ENCODE measurements at regions of chr19 and their contacts with region 1.

Region 1: DNA sequence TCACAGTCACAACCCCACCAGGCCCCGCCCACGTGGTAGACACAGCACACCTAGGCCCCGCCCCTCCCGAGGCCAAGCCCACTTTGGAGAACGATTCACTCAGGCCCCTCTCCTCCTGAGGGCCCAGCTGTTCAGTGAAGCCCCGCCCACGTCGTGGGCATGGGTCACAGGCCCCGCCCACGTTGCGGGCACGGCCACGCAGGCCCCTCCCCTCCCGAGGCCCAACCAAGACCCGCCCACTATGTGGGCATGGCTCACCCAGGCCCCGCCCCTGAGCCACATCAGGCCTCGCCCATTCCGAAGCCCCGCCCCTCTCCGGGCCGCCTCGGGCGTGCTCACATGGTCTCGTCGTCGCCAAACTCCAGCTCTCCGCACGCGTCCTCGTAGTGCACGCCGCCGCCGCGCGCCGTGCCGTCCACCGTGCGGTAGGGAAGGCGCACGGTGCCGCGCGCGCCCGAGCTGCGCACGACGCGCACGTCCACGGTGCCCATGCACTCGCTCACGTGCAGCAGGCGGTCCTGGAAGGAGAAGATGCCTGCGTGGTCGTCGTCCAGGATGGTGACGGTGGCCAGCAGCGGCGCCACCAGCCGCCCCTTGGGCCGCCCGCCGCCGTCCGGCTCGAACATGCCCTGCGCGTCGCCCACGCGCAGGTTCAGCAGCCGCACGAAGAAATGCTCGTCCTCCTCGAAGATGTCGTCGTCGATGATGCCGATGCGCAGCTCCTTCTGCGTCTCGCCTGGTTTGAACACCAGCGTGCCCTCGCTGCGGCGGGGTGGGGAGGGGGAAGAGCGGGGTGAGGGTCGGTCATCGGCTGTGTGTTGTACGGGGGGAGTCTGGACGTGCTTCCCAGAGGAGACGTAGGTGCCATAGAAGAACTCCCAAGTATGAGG is 24.0 kb downstream of the SLC8A2 start:
- DNase-seq: peak; percentile 47 to 79 (median 55)
- ATAC-seq: peak; percentile 79
- H3K4me3 ChIP-seq: no peak overlapping the region
- H3K4me3 Mint-ChIP-seq: peak overlapping the region; percentile 62 to 82 (median 76)
- H3K27ac ChIP-seq: no peak overlapping the region
- H3K27ac Mint-ChIP-seq: peak overlapping the region in 2 of 9 donors; percentile 31 to 68
- H3K4me1 ChIP-seq: peaks cover 26 to 33% of the 10 kb centered on the region in 2 donors
- H3K4me1 Mint-ChIP-seq: peaks cover 41 to 57% (median 45%) of the 10 kb centered on the region in 7 donors
- H3K27me3 ChIP-seq: peaks cover 3 to 5% of the 10 kb centered on the region in 2 donors
- H3K27me3 Mint-ChIP-seq: peaks cover 22 to 71% (median 53%) of the 10 kb centered on the region in 5 donors

Region 2: GRCh38 chr19:47315125-47315821 is 132.4 kb before region 1 on chr19:
- CTCF ChIA-PET with region 1: no interaction called
- POLR2A ChIA-PET with region 1: no interaction called
- intact Hi-C with region 1: no loop called
- DNase-seq: no peak
- ATAC-seq: peak; percentile 93
- H3K4me3 ChIP-seq: no peak overlapping the region
- H3K4me3 Mint-ChIP-seq: no peak overlapping the region
- H3K27ac ChIP-seq: no peak overlapping the region
- H3K27ac Mint-ChIP-seq: peak overlapping the region in 1 of 9 donors; percentile 18
- H3K4me1 ChIP-seq: no peaks in the 10 kb centered on the region
- H3K4me1 Mint-ChIP-seq: peaks cover 0 to 4% (median 0%) of the 10 kb centered on the region in 7 donors
- H3K27me3 ChIP-seq: no peaks in the 10 kb centered on the region
- H3K27me3 Mint-ChIP-seq: peaks cover 2 to 29% (median 21%) of the 10 kb centered on the region in 5 donors

Region 3: DNA sequence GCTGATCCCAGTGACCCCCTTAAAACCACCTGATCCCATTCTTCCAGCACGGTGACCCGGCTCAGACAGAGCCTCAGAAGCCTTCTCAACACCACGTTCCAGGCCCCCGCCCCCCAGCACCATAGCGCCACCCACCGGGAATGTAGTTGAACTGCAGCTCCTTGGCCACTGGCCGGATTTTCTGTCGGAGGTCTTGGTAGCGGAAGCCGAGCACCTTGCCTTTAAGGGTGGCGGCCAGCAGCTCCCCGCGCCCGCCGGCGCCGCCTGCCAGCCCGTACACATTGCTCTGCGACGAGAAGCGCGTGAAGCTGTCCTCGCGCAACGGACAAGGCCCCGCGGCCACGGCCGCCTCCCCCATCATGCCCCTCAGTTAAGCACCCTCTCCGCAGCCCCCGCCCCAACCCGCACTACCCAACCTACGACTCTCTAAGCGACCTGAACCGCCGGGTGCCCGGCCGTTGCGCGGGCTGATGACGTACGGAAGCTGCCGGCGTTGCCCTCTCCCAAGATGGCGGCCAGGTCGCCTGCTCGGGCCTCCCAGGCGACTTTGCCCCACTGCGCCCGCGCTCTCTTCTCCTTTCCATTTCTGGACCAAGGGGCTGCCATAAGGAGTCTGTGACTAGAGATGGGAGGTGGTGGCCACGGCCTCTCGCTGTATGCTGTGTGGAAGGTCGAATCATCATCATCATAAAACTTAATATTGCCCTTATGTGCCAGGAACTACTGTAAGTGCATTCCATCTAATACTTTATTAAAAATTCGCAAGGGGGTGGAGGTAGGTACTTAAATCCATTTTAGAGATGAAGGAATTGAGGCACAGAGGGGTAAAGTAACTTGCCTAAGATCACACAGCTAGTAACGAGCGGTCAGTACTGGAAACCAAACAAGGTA is 36.3 kb after region 1 on chr19 and contains the start of gene KPTN:
- CTCF ChIA-PET with region 1: no interaction called
- POLR2A ChIA-PET with region 1: interaction called, 6 read pairs
- intact Hi-C with region 1: loop called (anchors 1 to 2 kb)
- DNase-seq: peak; percentile 85 to 92 (median 88)
- ATAC-seq: peak; percentile 91
- H3K4me3 ChIP-seq: peak within 1 kb of the TSS; percentile 74
- H3K4me3 Mint-ChIP-seq: peak within 1 kb of the TSS; percentile 83 to 99 (median 96)
- H3K27ac ChIP-seq: peak within 1 kb of the TSS; percentile 96
- H3K27ac Mint-ChIP-seq: peak within 1 kb of the TSS; percentile 94 to 99 (median 97)
- H3K4me1 ChIP-seq: peaks cover 18% of the 10 kb centered on the region in 2 donors
- H3K4me1 Mint-ChIP-seq: peaks cover 22 to 39% (median 30%) of the 10 kb centered on the region in 7 donors
- H3K27me3 ChIP-seq: no peaks in the 10 kb centered on the region
- H3K27me3 Mint-ChIP-seq: peaks cover 0 to 4% (median 0%) of the 10 kb centered on the region in 5 donors
- total RNA-seq, gene KPTN: 5.1 to 9.2 (median 6.7) TPM